ENCODE measurements at regions of chr11 and their contacts with region 1.

Region 1: DNA sequence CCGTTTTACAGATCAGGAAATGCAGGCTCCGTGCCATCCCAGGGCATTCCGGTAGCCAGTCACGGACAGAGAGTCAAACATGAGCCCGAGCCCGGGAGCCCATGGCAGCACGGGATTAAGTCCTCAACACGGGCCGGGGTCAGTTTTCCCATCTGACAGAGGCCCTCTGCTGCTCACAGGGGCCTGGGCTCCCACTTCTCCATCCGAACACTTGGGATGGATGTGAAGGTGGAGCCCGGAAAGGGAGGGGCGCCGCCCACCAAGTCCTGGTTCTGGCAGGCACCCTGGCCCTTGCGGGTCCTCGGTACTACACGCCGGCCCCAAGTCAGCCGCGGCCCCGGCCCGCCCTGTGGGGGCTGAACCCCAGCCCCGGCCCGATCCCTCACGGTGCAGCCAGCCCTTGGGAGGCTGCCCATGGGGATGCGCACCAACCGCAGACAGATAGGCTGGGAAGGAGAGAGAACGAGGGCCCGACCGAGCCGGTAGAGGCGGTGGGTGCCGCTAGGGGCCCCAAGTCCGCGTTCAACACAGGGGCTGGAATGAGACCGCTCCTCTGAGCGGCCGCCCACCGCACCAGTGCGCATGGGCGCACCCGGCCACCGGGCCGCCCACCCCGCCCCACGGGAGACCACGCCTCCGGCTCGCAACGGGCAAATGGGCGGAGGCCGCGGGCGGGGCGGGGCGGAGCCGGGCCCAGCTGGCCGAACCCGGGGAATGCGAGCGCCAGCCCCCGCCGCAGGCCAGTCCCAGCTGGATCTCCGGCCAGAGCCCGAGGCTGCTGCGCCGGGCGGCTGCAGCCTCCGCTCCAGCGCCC is at the start of gene CAPN5:
- DNase-seq: peak; percentile 80 to 87 (median 86)
- H3K4me3 ChIP-seq: peak within 1 kb of the TSS; percentile 73 to 80
- H3K4me3 Mint-ChIP-seq: peak within 1 kb of the TSS; percentile 82 to 92 (median 86)
- H3K27ac ChIP-seq: peak within 1 kb of the TSS; percentile 48
- H3K27ac Mint-ChIP-seq: peak within 1 kb of the TSS; percentile 2 to 87 (median 63)
- H3K4me1 ChIP-seq: peaks cover 18% of the 10 kb centered on the region
- H3K4me1 Mint-ChIP-seq: peaks cover 4 to 16% (median 11%) of the 10 kb centered on the region in 4 donors
- H3K27me3 ChIP-seq: no peaks in the 10 kb centered on the region
- H3K27me3 Mint-ChIP-seq: no peaks in the 10 kb centered on the region
- total RNA-seq, gene CAPN5: 1.6 to 1.9 TPM

Region 2: GRCh38 chr11:77047007-77047927 is 19.2 kb before region 1 on chr11:
- CTCF ChIA-PET with region 1: interaction called, 9 read pairs
- POLR2A ChIA-PET with region 1: interaction called, 3 read pairs
- intact Hi-C with region 1: loop called (anchors 1 kb)
- DNase-seq: peak; percentile 90 to 94 (median 93)
- H3K4me3 ChIP-seq: peak overlapping the region; percentile 33 to 59
- H3K4me3 Mint-ChIP-seq: peak overlapping the region; percentile 67 to 83 (median 72)
- H3K27ac ChIP-seq: peak overlapping the region; percentile 61
- H3K27ac Mint-ChIP-seq: peak overlapping the region; percentile 24 to 92 (median 60)
- H3K4me1 ChIP-seq: peaks cover 16% of the 10 kb centered on the region
- H3K4me1 Mint-ChIP-seq: peaks cover 5 to 11% (median 6%) of the 10 kb centered on the region in 4 donors
- H3K27me3 ChIP-seq: no peaks in the 10 kb centered on the region
- H3K27me3 Mint-ChIP-seq: peaks cover 2 to 3% of the 10 kb centered on the region in 2 donors

Region 3: GRCh38 chr11:77082838-77083562 is 16.6 kb after region 1 on chr11:
- CTCF ChIA-PET with region 1: interaction called, 5 read pairs
- POLR2A ChIA-PET with region 1: interaction called, 6 read pairs
- intact Hi-C with region 1: loop called (anchors 2 kb)
- DNase-seq: peak; percentile 39 to 58 (median 44)
- H3K4me3 ChIP-seq: no peak overlapping the region
- H3K4me3 Mint-ChIP-seq: peak overlapping the region; percentile 57 to 85 (median 76)
- H3K27ac ChIP-seq: peak overlapping the region; percentile 24
- H3K27ac Mint-ChIP-seq: peak overlapping the region; percentile 77 to 95 (median 92)
- H3K4me1 ChIP-seq: peaks cover 18% of the 10 kb centered on the region
- H3K4me1 Mint-ChIP-seq: peaks cover 2 to 15% (median 10%) of the 10 kb centered on the region in 4 donors
- H3K27me3 ChIP-seq: no peaks in the 10 kb centered on the region
- H3K27me3 Mint-ChIP-seq: peaks cover 0 to 3% of the 10 kb centered on the region in 2 donors

Region 4: GRCh38 chr11:77473801-77474683 is 407.6 kb after region 1 on chr11 and contains the start of gene PAK1:
- CTCF ChIA-PET with region 1: no interaction called
- POLR2A ChIA-PET with region 1: no interaction called
- intact Hi-C with region 1: loop called (anchors 10 kb)
- DNase-seq: peak; percentile 87 to 96 (median 89)
- H3K4me3 ChIP-seq: peak within 1 kb of the TSS; percentile 42 to 49
- H3K4me3 Mint-ChIP-seq: peak within 1 kb of the TSS; percentile 87 to 97 (median 92)
- H3K27ac ChIP-seq: peak within 1 kb of the TSS; percentile 49
- H3K27ac Mint-ChIP-seq: peak within 1 kb of the TSS; percentile 96 to 100 (median 99)
- H3K4me1 ChIP-seq: peaks cover 11% of the 10 kb centered on the region
- H3K4me1 Mint-ChIP-seq: peaks cover 7 to 14% (median 12%) of the 10 kb centered on the region in 4 donors
- H3K27me3 ChIP-seq: no peaks in the 10 kb centered on the region
- H3K27me3 Mint-ChIP-seq: peaks cover 3 to 11% of the 10 kb centered on the region in 2 donors
- total RNA-seq, gene PAK1: 9.8 to 10.4 TPM

Measured in CD4-positive, alpha-beta memory T cell (primary cell).